ENCODE measurements at regions of chr11 and their contacts with region 1.

Region 1: GRCh38 chr11:30861064-30861463 is 274.9 kb upstream of the MPPED2 start:
- DNase-seq: peak; percentile 33
- H3K4me3 ChIP-seq: no peak overlapping the region
- H3K27ac ChIP-seq: no peak overlapping the region
- H3K4me1 ChIP-seq: peaks cover 23% of the 10 kb centered on the region
- H3K27me3 ChIP-seq: no peaks in the 10 kb centered on the region
- CTCF ChIP-seq: no peak

Region 2: GRCh38 chr11:30816959-30817880 is 43.8 kb before region 1 on chr11:
- CTCF ChIA-PET with region 1: no interaction called
- POLR2A ChIA-PET with region 1: interaction called, 10 read pairs
- intact Hi-C with region 1: no loop called
- DNase-seq: no peak
- H3K4me3 ChIP-seq: no peak overlapping the region
- H3K27ac ChIP-seq: no peak overlapping the region
- H3K4me1 ChIP-seq: peaks cover 32% of the 10 kb centered on the region
- H3K27me3 ChIP-seq: no peaks in the 10 kb centered on the region
- CTCF ChIP-seq: no peak

Region 3: DNA sequence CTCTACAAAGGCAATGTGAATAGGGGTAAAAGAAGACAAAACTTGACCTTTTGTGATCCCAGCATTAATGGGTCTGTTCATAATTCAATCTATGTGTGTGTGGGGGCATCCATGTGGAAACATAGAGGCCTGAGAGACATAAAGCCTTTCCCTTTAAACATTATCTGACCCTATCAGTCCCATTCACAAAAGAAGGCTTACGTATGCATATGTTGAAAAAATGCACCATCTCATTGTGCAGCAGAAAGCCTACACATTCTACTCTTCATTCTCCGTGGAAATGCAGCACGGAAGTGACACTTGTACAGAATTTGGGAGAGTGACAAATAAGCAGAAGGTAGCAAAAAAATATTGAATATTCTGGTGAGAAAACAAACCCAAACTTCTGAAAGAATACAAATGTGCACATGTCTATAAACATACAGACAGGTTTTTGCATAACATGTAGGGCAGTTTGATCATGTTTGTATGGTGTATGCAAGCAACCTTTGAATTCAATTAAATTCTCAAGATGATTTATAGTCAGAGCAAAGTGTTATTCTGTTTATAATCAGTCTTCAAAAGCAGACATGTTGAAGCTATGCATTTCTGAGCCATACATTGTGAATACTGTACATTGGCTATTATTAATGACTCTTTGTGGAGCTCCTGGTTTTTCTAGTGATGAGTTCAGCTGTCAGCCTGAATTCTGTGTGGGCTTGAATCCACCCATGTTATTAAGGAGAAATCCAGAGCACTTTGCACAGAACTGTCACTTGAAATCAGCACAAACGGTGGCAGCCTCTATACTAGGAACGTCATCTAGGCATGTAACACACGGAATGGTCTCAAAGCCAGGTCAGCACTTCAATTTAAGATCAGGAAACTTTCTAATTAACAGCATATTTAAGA is 271.7 kb after region 1 on chr11:
- CTCF ChIA-PET with region 1: no interaction called
- POLR2A ChIA-PET with region 1: no interaction called
- intact Hi-C with region 1: no loop called
- DNase-seq: no peak
- H3K4me3 ChIP-seq: no peak overlapping the region
- H3K27ac ChIP-seq: no peak overlapping the region
- H3K4me1 ChIP-seq: no peaks in the 10 kb centered on the region
- H3K27me3 ChIP-seq: no peaks in the 10 kb centered on the region
- CTCF ChIP-seq: no peak